Dorsolateral prefrontal cortex (tissue), 120 donors: ENCODE measurements at regions of chr5 and their contacts with region 1.

Region 1: GRCh38 chr5:37814699-37815098 is 25.1 kb downstream of the GDNF start:
- DNase-seq: no peak
- H3K4me3 ChIP-seq: no peak overlapping the region
- H3K27ac ChIP-seq: no peak overlapping the region
- H3K27me3 ChIP-seq: peaks cover 0 to 8% (median 0%) of the 10 kb centered on the region in 45 donors
- CTCF ChIP-seq: no peak

Region 2: DNA sequence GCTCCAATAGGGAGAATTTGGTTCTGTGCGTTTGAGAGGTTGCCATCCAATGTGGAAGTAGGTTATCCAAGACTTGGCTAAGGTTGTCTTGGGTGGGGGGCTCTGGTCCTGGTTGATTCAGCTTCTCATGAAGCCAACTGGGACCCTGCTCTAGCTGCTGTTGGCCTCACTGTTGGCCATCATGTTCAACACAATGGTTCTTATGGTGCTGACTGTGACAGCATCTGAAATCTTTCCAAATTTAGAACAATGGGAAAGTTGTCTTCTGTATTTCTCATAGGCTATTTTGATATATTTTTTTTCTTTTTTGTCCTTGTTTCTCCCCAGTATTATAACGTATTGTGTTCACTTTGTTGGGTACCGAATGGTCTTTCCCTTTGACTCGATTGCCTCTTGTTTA is 46.7 kb before region 1 on chr5:
- intact Hi-C with region 1: loop called (anchors 5 to 10 kb)
- DNase-seq: peak in 2 of 10 donors; percentile 24 to 39
- H3K4me3 ChIP-seq: peak overlapping the region in 3 of 59 donors; percentile 9 to 20 (median 10)
- H3K27ac ChIP-seq: peak overlapping the region; percentile 22 to 97 (median 87)
- H3K27me3 ChIP-seq: no peaks in the 10 kb centered on the region
- CTCF ChIP-seq: peak in 3 of 56 donors; percentile 3 to 20 (median 10)

Region 3: DNA sequence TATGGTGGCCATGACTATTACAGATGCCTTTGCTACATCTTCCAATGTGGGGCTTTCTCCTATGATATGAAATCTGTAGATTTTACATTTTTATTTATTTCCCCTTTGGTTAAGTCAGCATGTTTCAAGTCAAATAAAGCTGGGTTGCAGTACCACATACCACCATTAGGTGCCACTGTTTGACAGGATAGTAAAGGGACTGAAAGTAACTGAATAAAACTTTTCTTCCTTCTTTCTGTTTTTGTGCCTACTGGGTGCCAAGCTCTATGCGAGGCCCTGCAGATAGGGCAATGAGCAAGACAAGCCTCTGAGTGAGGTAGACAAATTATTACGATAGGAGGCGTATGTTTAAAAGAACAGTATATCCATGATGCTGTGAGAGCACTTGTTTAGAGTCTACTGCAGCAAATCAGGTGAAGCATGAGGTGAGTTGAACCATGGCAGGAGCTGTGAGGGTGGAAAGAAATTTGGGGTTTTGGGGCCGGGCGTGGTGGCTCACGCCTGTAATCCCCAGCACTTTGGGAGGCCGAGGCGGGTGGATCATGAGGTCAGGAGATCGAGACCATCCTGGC is 39.7 kb before region 1 on chr5:
- intact Hi-C with region 1: loop called in 1 of 2 experiments (anchors 5 kb)
- DNase-seq: no peak
- H3K4me3 ChIP-seq: no peak overlapping the region
- H3K27ac ChIP-seq: no peak overlapping the region
- H3K27me3 ChIP-seq: no peaks in the 10 kb centered on the region
- CTCF ChIP-seq: peak in 48 of 56 donors; percentile 12 to 58 (median 34)

Region 4: DNA sequence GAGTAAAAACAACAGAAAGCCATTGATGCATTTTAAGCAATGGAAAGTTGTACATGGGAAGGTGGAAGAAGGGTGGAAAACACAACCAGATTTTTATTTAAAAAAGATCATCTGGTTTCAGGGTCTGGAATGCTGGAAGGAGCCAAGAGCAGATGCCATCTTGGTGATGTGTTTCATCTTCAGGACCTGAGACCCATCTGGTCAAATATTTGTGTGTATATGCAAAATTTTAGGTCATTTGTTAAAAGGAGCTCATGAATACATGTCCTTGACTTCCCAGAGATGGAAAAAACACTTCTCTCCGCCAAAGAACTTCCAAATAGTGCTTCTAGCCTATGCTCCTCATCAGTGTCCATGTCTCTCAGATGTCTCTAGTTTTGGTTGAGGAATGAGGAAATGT is 135.7 kb after region 1 on chr5:
- intact Hi-C with region 1: no loop called
- DNase-seq: no peak
- H3K4me3 ChIP-seq: no peak overlapping the region
- H3K27ac ChIP-seq: no peak overlapping the region
- H3K27me3 ChIP-seq: no peaks in the 10 kb centered on the region
- CTCF ChIP-seq: no peak